Natural killer cell (primary cell): ENCODE measurements at regions of chr6 and their contacts with region 1.

Region 1: DNA sequence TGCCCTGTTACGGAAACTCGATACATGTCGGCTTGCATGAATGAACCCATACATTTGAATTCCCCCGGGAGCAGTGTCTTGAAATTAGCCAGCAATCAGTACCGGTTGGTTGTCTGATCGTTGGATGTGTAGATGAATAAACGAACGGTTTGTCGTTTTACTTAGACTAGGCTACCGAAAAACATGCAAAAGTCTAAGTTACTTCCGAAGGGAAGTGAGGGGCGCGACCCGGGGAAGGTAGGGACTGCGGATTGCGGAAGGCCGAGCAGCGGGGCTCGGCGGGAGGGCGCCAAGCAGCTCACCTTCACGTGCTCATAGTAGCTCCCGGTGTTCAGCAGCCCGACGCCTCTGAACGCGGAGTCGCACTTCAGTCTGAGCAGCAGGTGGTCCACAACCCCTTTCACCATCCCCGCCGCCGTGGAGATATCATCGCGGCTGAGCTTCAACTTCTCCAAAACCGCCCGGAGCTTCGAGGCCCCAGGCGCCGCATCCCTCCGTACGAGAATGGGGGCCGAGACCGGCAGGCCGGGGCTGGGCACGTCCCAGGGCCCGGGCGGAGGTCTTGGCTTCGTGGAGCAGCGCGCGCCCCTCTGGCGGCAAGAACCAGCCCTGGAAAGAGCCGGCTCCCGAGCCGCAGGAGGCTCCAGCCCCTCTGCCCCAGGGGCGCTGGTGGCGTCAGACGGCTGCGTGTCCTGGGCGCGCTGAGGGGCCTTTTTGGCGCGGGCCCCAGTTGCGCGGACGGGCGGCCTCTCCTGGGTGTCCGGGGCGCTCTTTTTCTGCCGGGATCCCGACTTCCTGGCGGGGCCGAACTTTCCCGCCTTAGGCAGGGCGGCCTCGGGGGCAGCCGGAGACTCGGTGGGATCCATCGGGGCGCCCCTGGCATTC is 632 bp downstream of the CGAS start:
- DNase-seq: peak; percentile 41 to 69
- ATAC-seq: peak; percentile 51 to 64 (median 62)
- H3K4me3 ChIP-seq: peak overlapping the region; percentile 63
- H3K4me3 Mint-ChIP-seq: peak overlapping the region; percentile 91
- H3K27ac ChIP-seq: peak overlapping the region; percentile 68
- H3K27ac Mint-ChIP-seq: peak overlapping the region; percentile 11 to 83
- H3K4me1 ChIP-seq: peaks cover 30% of the 10 kb centered on the region
- H3K4me1 Mint-ChIP-seq: peaks cover 21 to 27% of the 10 kb centered on the region in 2 donors
- H3K27me3 ChIP-seq: no peaks in the 10 kb centered on the region
- H3K27me3 Mint-ChIP-seq: no peaks in the 10 kb centered on the region
- CTCF ChIP-seq: no peak

Region 2: GRCh38 chr6:73388800-73389512 is 62.5 kb before region 1 on chr6:
- intact Hi-C with region 1: loop called (anchors 2 kb)
- DNase-seq: peak; percentile 44 to 70
- ATAC-seq: peak; percentile 81 to 92 (median 87)
- H3K4me3 ChIP-seq: peak overlapping the region; percentile 88
- H3K4me3 Mint-ChIP-seq: peak overlapping the region; percentile 89
- H3K27ac ChIP-seq: peak overlapping the region; percentile 74
- H3K27ac Mint-ChIP-seq: peak overlapping the region; percentile 80 to 90
- H3K4me1 ChIP-seq: peaks cover 18% of the 10 kb centered on the region
- H3K4me1 Mint-ChIP-seq: peaks cover 12 to 22% of the 10 kb centered on the region in 2 donors
- H3K27me3 ChIP-seq: no peaks in the 10 kb centered on the region
- H3K27me3 Mint-ChIP-seq: no peaks in the 10 kb centered on the region
- CTCF ChIP-seq: peak; percentile 35